ENCODE measurements at regions of chr9 and their contacts with region 1.

Region 1: DNA sequence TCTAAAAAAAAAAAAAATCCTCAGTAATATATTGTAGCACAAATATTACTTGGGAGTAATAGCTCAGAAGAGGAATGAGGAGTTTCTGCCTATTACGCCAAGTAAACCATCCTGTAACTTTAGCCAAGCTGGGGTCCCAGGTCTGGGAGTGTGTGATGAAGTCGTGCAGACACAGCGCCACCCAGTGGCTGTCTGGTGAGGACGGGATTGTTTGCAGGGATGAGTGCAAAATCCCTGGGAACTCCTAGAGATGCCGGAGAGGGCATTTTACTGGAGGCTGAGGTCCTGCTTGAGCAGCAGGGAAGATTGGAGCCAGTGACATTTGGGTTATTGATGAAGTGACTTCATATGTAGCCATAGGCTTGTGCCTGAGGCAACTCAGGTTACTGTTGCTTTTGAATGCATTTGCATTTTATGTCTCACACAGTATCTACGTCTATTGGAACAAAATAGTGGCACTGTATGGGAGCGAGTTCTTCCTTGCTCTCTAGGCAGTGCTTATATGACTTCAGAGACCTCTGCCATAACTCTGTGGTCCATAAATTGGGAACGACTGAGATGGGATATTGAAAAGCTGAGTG is 72.8 kb downstream of the PSAT1 start:
- DNase-seq: peak; percentile 45 to 95 (median 87)

Region 2: GRCh38 chr9:78261403-78262001 is 108.2 kb before region 1 on chr9:
- intact Hi-C with region 1: loop called (anchors 2 kb)
- DNase-seq: no peak

Region 3: DNA sequence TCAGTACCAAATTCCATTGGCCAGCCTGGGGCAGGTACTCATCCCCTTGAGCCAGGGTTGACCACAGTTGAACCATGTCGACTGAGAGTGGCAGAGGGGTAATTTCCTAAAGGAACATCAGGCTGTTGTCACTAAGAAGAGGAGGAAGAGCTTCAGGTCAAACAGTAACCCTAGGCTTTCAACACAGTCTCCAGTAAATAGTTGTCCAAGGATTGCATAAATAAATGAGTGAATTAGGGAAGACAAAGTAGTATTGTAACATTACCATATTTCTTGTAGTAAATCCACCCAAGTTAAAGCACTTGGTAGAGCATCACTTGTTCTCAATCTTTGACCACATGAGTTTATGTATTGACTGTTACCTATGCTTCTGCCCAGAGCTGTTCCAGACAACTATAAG is 65.4 kb before region 1 on chr9:
- intact Hi-C with region 1: loop called (anchors 10 kb)
- DNase-seq: no peak